Sciatic nerve (tissue), 2 donors: ENCODE measurements at regions of chr5 and their contacts with region 1.

Region 1: GRCh38 chr5:103232393-103232999 is 26.1 kb upstream of the MACIR start:
- DNase-seq: no peak
- ATAC-seq: peak; percentile 77

Region 2: GRCh38 chr5:103243665-103244064 is 11.2 kb after region 1 on chr5:
- intact Hi-C with region 1: no loop called
- DNase-seq: no peak
- ATAC-seq: no peak

Region 3: GRCh38 chr5:103475629-103476240 is 243.2 kb after region 1 on chr5:
- intact Hi-C with region 1: loop called (anchors 10 kb)
- DNase-seq: no peak
- ATAC-seq: peak; percentile 54